Common myeloid progenitor, CD34-positive (primary cell): ENCODE measurements at regions of chr22 and their contacts with region 1.

Region 1: GRCh38 chr22:29302681-29303465 is 3.6 kb upstream of the GAS2L1 start:
- DNase-seq: no peak
- H3K4me3 ChIP-seq: peak overlapping the region in 2 of 7 experiments; percentile 12 to 42
- H3K27ac ChIP-seq: no peak overlapping the region
- H3K4me1 ChIP-seq: peaks cover 0 to 45% (median 38%) of the 10 kb centered on the region in 4 experiments
- H3K27me3 ChIP-seq: no peaks in the 10 kb centered on the region

Region 2: GRCh38 chr22:29245637-29246385 is 57.1 kb before region 1 on chr22:
- CTCF ChIA-PET with region 1: no interaction called
- POLR2A ChIA-PET with region 1: no interaction called
- DNase-seq: peak; percentile 67 to 81 (median 79)
- H3K4me3 ChIP-seq: no peak overlapping the region
- H3K27ac ChIP-seq: no peak overlapping the region
- H3K4me1 ChIP-seq: peaks cover 0 to 9% (median 5%) of the 10 kb centered on the region in 4 experiments
- H3K27me3 ChIP-seq: no peaks in the 10 kb centered on the region

Region 3: GRCh38 chr22:29320546-29320945 is 17.7 kb after region 1 on chr22:
- CTCF ChIA-PET with region 1: interaction called, 13 read pairs
- POLR2A ChIA-PET with region 1: interaction called, 3 read pairs
- DNase-seq: peak in 2 of 3 donors; percentile 39 to 57
- H3K4me3 ChIP-seq: no peak overlapping the region
- H3K27ac ChIP-seq: no peak overlapping the region
- H3K4me1 ChIP-seq: peaks cover 0 to 5% (median 3%) of the 10 kb centered on the region in 4 experiments
- H3K27me3 ChIP-seq: peaks cover 0 to 14% (median 7%) of the 10 kb centered on the region in 5 experiments